Activated CD4-positive, alpha-beta T cell treated with anti-CD3 and anti-CD28 coated beads for 36 hours (primary cell): ENCODE measurements at regions of chr16 and their contacts with region 1.

Region 1: GRCh38 chr16:352547-353403 is at the start of gene AXIN1:
- DNase-seq: peak; percentile 100
- ATAC-seq: peak; percentile 89
- H3K4me3 Mint-ChIP-seq: peak within 1 kb of the TSS; percentile 80
- H3K27ac Mint-ChIP-seq: peak within 1 kb of the TSS; percentile 79
- H3K4me1 Mint-ChIP-seq: peaks cover 45% of the 10 kb centered on the region
- H3K27me3 Mint-ChIP-seq: no peaks in the 10 kb centered on the region
- total RNA-seq, gene AXIN1: 20.0 to 23.8 TPM

Region 2: DNA sequence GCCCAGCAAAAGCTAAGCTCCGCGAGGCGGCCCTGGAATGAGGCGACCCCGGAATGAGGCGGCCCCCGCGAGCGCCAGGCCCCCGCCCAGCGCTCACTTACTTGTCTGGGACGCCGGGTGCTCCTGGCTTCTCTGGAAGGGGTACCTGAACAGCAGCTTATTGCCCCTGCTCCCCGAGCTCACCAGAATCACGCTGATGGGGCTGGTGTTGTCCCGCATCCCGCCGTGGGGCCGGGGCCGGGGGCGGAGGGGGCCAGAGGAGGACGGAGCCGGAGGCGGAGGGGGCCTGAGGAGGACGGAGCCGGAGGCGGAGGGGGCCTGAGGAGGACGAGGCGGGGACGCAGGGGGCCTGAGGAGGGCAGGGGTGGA is 214.7 kb before region 1 on chr16:
- CTCF ChIA-PET with region 1: no interaction called
- POLR2A ChIA-PET with region 1: no interaction called
- intact Hi-C with region 1: loop called in 1 of 2 experiments (anchors 1 kb)
- DNase-seq: peak; percentile 43
- ATAC-seq: peak; percentile 8
- H3K4me3 Mint-ChIP-seq: peak overlapping the region; percentile 78
- H3K27ac Mint-ChIP-seq: peak overlapping the region; percentile 81
- H3K4me1 Mint-ChIP-seq: peaks cover 24% of the 10 kb centered on the region
- H3K27me3 Mint-ChIP-seq: no peaks in the 10 kb centered on the region

Region 3: GRCh38 chr16:324451-325334 is 28.1 kb before region 1 on chr16:
- CTCF ChIA-PET with region 1: interaction called, 3 read pairs
- POLR2A ChIA-PET with region 1: no interaction called
- intact Hi-C with region 1: loop called in 1 of 2 experiments (anchors 2 kb)
- DNase-seq: peak; percentile 73
- ATAC-seq: peak; percentile 63
- H3K4me3 Mint-ChIP-seq: peak overlapping the region; percentile 49
- H3K27ac Mint-ChIP-seq: peak overlapping the region; percentile 51
- H3K4me1 Mint-ChIP-seq: peaks cover 46% of the 10 kb centered on the region
- H3K27me3 Mint-ChIP-seq: no peaks in the 10 kb centered on the region

Region 4: GRCh38 chr16:401468-402348 is 48.9 kb after region 1 on chr16 and contains the start of gene DECR2:
- CTCF ChIA-PET with region 1: no interaction called
- POLR2A ChIA-PET with region 1: no interaction called
- intact Hi-C with region 1: loop called in 1 of 2 experiments (anchors 1 kb)
- DNase-seq: peak; percentile 100
- ATAC-seq: peak; percentile 87
- H3K4me3 Mint-ChIP-seq: peak within 1 kb of the TSS; percentile 82
- H3K27ac Mint-ChIP-seq: peak within 1 kb of the TSS; percentile 87
- H3K4me1 Mint-ChIP-seq: peaks cover 10% of the 10 kb centered on the region
- H3K27me3 Mint-ChIP-seq: no peaks in the 10 kb centered on the region
- total RNA-seq, gene DECR2: 11.5 to 13.0 TPM

Region 5: GRCh38 chr16:684067-684794 is 331.5 kb after region 1 on chr16 and contains the start of gene JMJD8:
- CTCF ChIA-PET with region 1: no interaction called
- POLR2A ChIA-PET with region 1: no interaction called
- intact Hi-C with region 1: loop called in 1 of 2 experiments (anchors 1 kb)
- DNase-seq: peak; percentile 99
- ATAC-seq: peak; percentile 80
- H3K4me3 Mint-ChIP-seq: peak within 1 kb of the TSS; percentile 76
- H3K27ac Mint-ChIP-seq: peak within 1 kb of the TSS; percentile 58
- H3K4me1 Mint-ChIP-seq: peaks cover 40% of the 10 kb centered on the region
- H3K27me3 Mint-ChIP-seq: no peaks in the 10 kb centered on the region
- total RNA-seq, gene JMJD8: 26.1 to 31.4 TPM